ENCODE measurements at regions of chr4 and their contacts with region 1.

Region 1: GRCh38 chr4:24840821-24841587 is 45.6 kb downstream of the SOD3 start:
- DNase-seq: no peak
- ATAC-seq: no peak
- H3K4me3 ChIP-seq: no peak overlapping the region
- H3K27ac ChIP-seq: peak overlapping the region; percentile 71 to 84
- H3K4me1 ChIP-seq: peaks cover 0 to 7% of the 10 kb centered on the region in 2 donors
- H3K27me3 ChIP-seq: no peaks in the 10 kb centered on the region

Region 2: GRCh38 chr4:23889814-23890341 is 951.1 kb before region 1 on chr4 and contains the start of gene PPARGC1A:
- intact Hi-C with region 1: loop called in 1 of 2 experiments (anchors 10 kb)
- DNase-seq: peak; percentile 56 to 69
- ATAC-seq: peak; percentile 79
- H3K4me3 ChIP-seq: peak within 1 kb of the TSS; percentile 61 to 92
- H3K27ac ChIP-seq: no peak within 1 kb of the TSS
- H3K4me1 ChIP-seq: no peaks in the 10 kb centered on the region
- H3K27me3 ChIP-seq: no peaks in the 10 kb centered on the region
- total RNA-seq, gene PPARGC1A: 2.6 to 3.8 TPM

Region 3: DNA sequence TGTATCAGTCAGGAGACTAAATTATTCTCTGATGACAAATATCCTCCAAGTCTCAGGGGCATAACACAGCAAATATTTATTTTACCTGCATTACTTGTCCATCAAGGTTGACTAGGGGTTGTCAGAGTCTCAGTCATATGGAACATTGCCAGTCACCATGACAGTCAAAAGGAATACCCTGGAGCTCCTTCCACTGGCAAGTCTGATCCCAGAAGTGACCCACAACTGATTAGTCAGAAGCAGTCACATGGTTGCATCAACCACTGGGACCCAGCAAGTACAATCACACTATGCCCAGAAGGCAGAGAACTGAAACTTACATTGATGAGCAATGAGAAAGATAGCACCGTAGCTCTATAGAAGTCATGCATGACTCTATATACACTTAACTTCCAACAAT is 87.5 kb before region 1 on chr4:
- intact Hi-C with region 1: no loop called
- DNase-seq: no peak
- ATAC-seq: no peak
- H3K4me3 ChIP-seq: no peak overlapping the region
- H3K27ac ChIP-seq: no peak overlapping the region
- H3K4me1 ChIP-seq: no peaks in the 10 kb centered on the region
- H3K27me3 ChIP-seq: no peaks in the 10 kb centered on the region

Region 4: GRCh38 chr4:24935856-24936255 is 94.9 kb after region 1 on chr4:
- intact Hi-C with region 1: no loop called
- DNase-seq: no peak
- ATAC-seq: no peak
- H3K4me3 ChIP-seq: no peak overlapping the region
- H3K27ac ChIP-seq: no peak overlapping the region
- H3K4me1 ChIP-seq: no peaks in the 10 kb centered on the region
- H3K27me3 ChIP-seq: peaks cover 0 to 2% of the 10 kb centered on the region in 2 donors

Measured in aorta (tissue), 5 donors.